Common myeloid progenitor, CD34-positive (primary cell): ENCODE measurements at regions of chr5 and their contacts with region 1.

Region 1: DNA sequence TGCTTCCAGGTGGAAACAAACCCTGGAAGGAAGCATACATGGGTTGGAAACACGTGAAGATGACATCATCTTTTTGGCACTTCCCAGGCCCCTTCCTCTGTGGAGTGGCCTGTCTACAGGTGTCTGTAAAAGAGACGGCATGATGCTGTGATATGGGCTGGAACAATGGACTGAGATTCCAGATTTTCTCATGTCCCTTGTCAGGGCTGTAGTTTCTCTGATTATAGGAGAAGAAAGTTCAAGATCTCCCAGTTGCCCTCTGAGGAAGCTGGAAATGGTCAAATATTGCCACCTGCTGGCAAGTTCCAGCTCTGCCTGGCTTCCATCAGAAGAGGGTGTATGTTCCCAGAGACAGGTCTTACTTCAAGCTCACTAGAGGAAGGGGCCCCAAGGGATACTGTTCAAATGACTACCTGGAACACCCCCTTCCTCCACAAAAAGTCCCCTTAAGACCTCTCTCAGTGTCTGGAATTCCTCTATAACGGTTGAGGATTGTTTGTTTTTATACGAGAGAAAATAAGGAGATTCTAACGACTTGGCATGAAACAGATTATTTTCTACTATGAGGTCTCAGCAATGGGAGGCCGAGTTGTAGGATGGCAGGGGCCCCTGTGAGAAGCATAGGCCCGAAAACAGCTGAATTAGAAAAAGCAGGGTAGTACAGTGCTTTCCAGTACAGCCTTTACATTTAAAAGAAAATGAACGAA is 7.3 kb upstream of the ANXA6 start:
- DNase-seq: peak; percentile 80 to 90 (median 83)
- H3K4me3 ChIP-seq: no peak overlapping the region
- H3K27ac ChIP-seq: no peak overlapping the region
- H3K4me1 ChIP-seq: peaks cover 0 to 3% (median 0%) of the 10 kb centered on the region in 4 experiments
- H3K27me3 ChIP-seq: no peaks in the 10 kb centered on the region

Region 2: GRCh38 chr5:150836703-150837102 is 328.1 kb before region 1 on chr5:
- CTCF ChIA-PET with region 1: no interaction called
- POLR2A ChIA-PET with region 1: no interaction called
- DNase-seq: no peak
- H3K4me3 ChIP-seq: no peak overlapping the region
- H3K27ac ChIP-seq: no peak overlapping the region
- H3K4me1 ChIP-seq: no peaks in the 10 kb centered on the region
- H3K27me3 ChIP-seq: no peaks in the 10 kb centered on the region

Region 3: DNA sequence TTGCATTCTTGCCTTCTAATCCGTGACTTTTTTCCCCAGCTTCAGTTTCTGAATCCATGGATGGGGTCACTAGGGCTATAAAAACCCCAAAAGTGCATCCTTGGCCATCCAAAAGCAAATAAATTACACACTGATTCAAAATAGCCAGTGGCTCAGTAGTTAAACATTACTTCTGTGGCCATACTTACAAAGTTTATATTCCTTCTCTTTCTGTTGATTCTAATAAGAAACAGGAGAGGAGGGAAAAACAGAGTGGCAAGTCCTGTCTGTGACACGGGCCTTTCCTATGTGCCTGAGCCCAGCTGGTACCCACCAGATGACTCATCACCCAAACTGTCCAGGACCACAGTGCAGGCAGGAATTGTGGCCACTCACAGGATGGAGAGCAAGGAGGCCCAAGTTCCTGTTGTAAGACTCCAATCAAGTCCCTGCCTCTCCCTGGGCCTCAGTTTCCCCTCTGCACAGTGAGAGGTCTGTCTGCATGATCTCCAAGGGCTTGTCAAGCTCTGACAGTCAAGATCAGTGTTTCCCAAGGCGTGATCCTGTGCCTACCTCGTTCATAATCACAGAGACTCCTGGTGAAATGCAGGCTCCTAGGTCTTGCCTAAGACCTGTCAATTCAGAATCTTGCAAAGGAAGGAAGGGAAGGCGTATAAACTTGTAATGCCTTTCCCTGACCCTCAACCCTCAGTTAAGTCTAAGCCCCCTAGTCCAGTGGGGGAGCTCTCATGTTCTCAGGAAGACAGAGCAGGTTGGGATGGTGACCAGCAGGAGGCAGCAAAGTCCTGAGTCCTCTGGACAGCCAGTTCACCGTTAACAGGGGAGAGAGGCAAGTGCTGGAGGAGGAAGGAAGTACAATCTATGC is 113.5 kb before region 1 on chr5:
- CTCF ChIA-PET with region 1: interaction called, 78 read pairs
- POLR2A ChIA-PET with region 1: no interaction called
- DNase-seq: peak; percentile 84 to 91 (median 86)
- H3K4me3 ChIP-seq: no peak overlapping the region
- H3K27ac ChIP-seq: no peak overlapping the region
- H3K4me1 ChIP-seq: peaks cover 1 to 13% (median 9%) of the 10 kb centered on the region in 4 experiments
- H3K27me3 ChIP-seq: no peaks in the 10 kb centered on the region

Region 4: DNA sequence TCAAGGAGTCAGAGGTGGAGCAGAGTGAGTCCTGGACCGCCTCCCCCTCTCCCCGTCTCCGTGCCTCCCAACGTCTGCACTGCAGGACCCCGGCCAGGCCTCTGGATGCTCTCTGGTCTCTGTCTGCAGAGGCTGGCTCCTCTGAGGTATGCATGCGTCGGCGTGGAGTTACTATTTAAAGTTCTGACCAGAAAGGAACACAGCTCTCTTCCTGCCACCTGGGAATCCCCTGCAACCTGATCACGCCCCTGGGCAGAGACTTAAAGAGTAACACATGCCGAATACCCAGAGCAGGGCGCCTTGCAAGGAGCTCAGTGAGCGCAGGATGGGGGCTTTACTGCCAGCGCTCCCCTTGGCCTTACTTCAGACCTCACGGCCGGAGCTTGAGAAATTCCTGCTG is 23.3 kb before region 1 on chr5:
- CTCF ChIA-PET with region 1: interaction called, 558 read pairs
- POLR2A ChIA-PET with region 1: no interaction called
- DNase-seq: peak in 2 of 3 donors; percentile 35 to 43
- H3K4me3 ChIP-seq: peak overlapping the region in 2 of 7 experiments; percentile 6 to 21
- H3K27ac ChIP-seq: peak overlapping the region in 1 of 2 experiments; percentile 51
- H3K4me1 ChIP-seq: peaks cover 3 to 40% (median 16%) of the 10 kb centered on the region in 4 experiments
- H3K27me3 ChIP-seq: no peaks in the 10 kb centered on the region

Region 5: GRCh38 chr5:151208481-151208914 is 43.7 kb after region 1 on chr5:
- CTCF ChIA-PET with region 1: interaction called, 15 read pairs
- POLR2A ChIA-PET with region 1: interaction called, 3 read pairs
- DNase-seq: peak in 1 of 3 donors; percentile 12
- H3K4me3 ChIP-seq: no peak overlapping the region
- H3K27ac ChIP-seq: peak overlapping the region in 1 of 2 experiments; percentile 58
- H3K4me1 ChIP-seq: peaks cover 22 to 46% (median 39%) of the 10 kb centered on the region in 4 experiments
- H3K27me3 ChIP-seq: no peaks in the 10 kb centered on the region

Region 6: GRCh38 chr5:151230048-151230680 is 65.3 kb after region 1 on chr5:
- CTCF ChIA-PET with region 1: interaction called, 11 read pairs
- POLR2A ChIA-PET with region 1: no interaction called
- DNase-seq: no peak
- H3K4me3 ChIP-seq: no peak overlapping the region
- H3K27ac ChIP-seq: no peak overlapping the region
- H3K4me1 ChIP-seq: peaks cover 5 to 16% (median 10%) of the 10 kb centered on the region in 4 experiments
- H3K27me3 ChIP-seq: no peaks in the 10 kb centered on the region

Region 7: GRCh38 chr5:151970885-151971284 is 806.0 kb after region 1 on chr5:
- CTCF ChIA-PET with region 1: no interaction called
- POLR2A ChIA-PET with region 1: no interaction called
- DNase-seq: no peak
- H3K4me3 ChIP-seq: no peak overlapping the region
- H3K27ac ChIP-seq: no peak overlapping the region
- H3K4me1 ChIP-seq: no peaks in the 10 kb centered on the region
- H3K27me3 ChIP-seq: no peaks in the 10 kb centered on the region